SK-N-SH (cell line): ENCODE measurements at regions of chr19 and their contacts with region 1.

Region 1: GRCh38 chr19:38142176-38143035 is 81.6 kb downstream of the DPF1 start:
- DNase-seq: peak; percentile 87
- H3K4me3 ChIP-seq: no peak overlapping the region
- H3K27ac ChIP-seq: no peak overlapping the region
- H3K4me1 ChIP-seq: no peaks in the 10 kb centered on the region
- H3K27me3 ChIP-seq: no peaks in the 10 kb centered on the region
- CTCF ChIP-seq: peak; percentile 71
- EP300 ChIP-seq: no peak
- RAD21 ChIP-seq: peak; percentile 88

Region 2: DNA sequence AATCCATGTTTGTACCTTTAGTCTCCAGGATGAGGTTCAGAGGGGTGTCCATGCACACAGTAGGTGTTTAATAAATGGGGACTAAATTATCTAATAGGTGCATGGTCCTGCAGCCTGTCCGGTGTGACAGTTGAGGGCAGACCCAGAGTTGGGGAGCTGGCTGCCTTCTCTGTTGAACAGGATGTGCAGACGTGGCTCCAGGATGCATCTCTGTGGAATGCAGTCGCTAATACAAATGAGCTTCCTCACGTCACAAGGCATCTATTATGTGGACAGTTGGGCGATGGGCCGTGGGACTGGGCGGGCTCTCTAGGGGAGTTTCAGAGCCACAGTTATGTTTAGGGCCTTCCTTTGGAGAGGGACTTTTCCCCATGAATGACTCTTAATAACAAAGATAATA is 164.4 kb before region 1 on chr19:
- CTCF ChIA-PET with region 1: no interaction called
- POLR2A ChIA-PET with region 1: no interaction called
- DNase-seq: no peak
- H3K4me3 ChIP-seq: no peak overlapping the region
- H3K27ac ChIP-seq: peak overlapping the region in 1 of 2 experiments; percentile 62; a peak in 2 of 4 replicates
- H3K4me1 ChIP-seq: peaks cover 4 to 6% of the 10 kb centered on the region in 2 experiments; a peak in 1 of 4 replicates
- H3K27me3 ChIP-seq: no peaks in the 10 kb centered on the region
- CTCF ChIP-seq: no peak
- EP300 ChIP-seq: no peak
- RAD21 ChIP-seq: no peak

Region 3: GRCh38 chr19:38049105-38049649 is 93.2 kb before region 1 on chr19:
- CTCF ChIA-PET with region 1: no interaction called
- POLR2A ChIA-PET with region 1: no interaction called
- DNase-seq: no peak
- H3K4me3 ChIP-seq: no peak overlapping the region
- H3K27ac ChIP-seq: no peak overlapping the region
- H3K4me1 ChIP-seq: no peaks in the 10 kb centered on the region
- H3K27me3 ChIP-seq: no peaks in the 10 kb centered on the region
- CTCF ChIP-seq: no peak
- EP300 ChIP-seq: no peak
- RAD21 ChIP-seq: no peak

Region 4: GRCh38 chr19:38095411-38096308 is 46.7 kb before region 1 on chr19:
- CTCF ChIA-PET with region 1: interaction called, 11 read pairs
- POLR2A ChIA-PET with region 1: no interaction called
- DNase-seq: peak; percentile 74
- H3K4me3 ChIP-seq: no peak overlapping the region; a peak in 1 of 4 replicates
- H3K27ac ChIP-seq: no peak overlapping the region
- H3K4me1 ChIP-seq: peaks cover 0 to 20% of the 10 kb centered on the region in 2 experiments; a peak in 1 of 4 replicates
- H3K27me3 ChIP-seq: no peaks in the 10 kb centered on the region
- CTCF ChIP-seq: peak; percentile 75
- EP300 ChIP-seq: no peak
- RAD21 ChIP-seq: peak; percentile 65

Region 5: GRCh38 chr19:38122402-38123093 is 19.9 kb before region 1 on chr19:
- CTCF ChIA-PET with region 1: interaction called, 14 read pairs
- POLR2A ChIA-PET with region 1: no interaction called
- DNase-seq: no peak
- H3K4me3 ChIP-seq: no peak overlapping the region
- H3K27ac ChIP-seq: no peak overlapping the region
- H3K4me1 ChIP-seq: no peaks in the 10 kb centered on the region
- H3K27me3 ChIP-seq: no peaks in the 10 kb centered on the region
- CTCF ChIP-seq: no peak
- EP300 ChIP-seq: no peak
- RAD21 ChIP-seq: no peak

Region 6: DNA sequence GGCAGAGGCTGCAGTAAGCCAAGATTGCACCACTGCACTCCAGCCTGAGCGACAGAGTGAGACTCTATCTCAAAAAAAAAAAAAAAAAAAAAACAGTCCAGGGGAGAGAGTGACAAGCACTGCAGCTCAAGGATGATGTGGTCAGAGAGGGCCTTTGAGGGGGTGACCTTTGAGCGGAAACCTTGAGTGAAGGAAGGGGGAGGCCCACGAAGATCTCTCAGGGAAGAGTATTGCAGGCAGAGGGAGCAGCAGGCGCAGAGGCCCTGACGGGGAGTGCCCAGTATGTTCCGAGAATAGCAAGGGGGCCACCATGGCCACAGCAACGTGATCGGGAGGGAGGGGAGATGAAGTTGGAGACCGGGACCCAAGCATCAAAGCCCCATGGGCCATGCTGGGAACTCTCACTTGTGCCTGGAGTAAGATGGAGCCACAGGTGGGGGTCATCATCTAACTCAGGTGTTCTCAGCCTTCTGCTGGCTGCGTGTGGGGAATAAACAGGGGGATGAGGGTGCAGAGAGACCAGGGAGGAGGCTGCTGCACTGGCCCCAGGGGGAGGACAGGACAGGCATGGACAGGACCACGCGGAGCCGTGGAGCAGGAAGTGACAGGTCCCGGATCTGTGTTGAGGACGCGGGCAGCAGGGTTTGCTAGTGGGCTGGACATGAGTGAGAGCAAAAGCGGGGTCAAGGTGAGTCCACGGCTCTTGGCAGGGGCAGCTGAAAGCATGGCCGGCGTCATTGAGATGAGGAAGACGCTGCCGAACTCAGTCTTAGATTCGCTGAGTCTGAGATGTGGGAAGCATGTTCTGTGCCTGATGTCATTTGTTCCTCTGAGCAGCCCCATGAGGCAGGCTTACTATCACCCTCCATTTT is 21.2 kb after region 1 on chr19:
- CTCF ChIA-PET with region 1: interaction called, 14 read pairs
- POLR2A ChIA-PET with region 1: no interaction called
- DNase-seq: no peak
- H3K4me3 ChIP-seq: no peak overlapping the region
- H3K27ac ChIP-seq: no peak overlapping the region
- H3K4me1 ChIP-seq: no peaks in the 10 kb centered on the region
- H3K27me3 ChIP-seq: no peaks in the 10 kb centered on the region
- CTCF ChIP-seq: no peak
- EP300 ChIP-seq: no peak
- RAD21 ChIP-seq: no peak

Region 7: GRCh38 chr19:38224014-38224862 is 81.8 kb after region 1 on chr19 and contains the start of gene DPF1:
- CTCF ChIA-PET with region 1: interaction called, 23 read pairs
- POLR2A ChIA-PET with region 1: no interaction called
- DNase-seq: peak; percentile 99
- H3K4me3 ChIP-seq: peak within 1 kb of the TSS; percentile 53 to 65
- H3K27ac ChIP-seq: peak within 1 kb of the TSS in 1 of 2 experiments; percentile 31; a peak in 1 of 4 replicates
- H3K4me1 ChIP-seq: peaks cover 0 to 9% of the 10 kb centered on the region in 2 experiments; a peak in 1 of 4 replicates
- H3K27me3 ChIP-seq: no peaks in the 10 kb centered on the region
- CTCF ChIP-seq: peak; percentile 28
- EP300 ChIP-seq: no peak
- RAD21 ChIP-seq: 0 out of 2 replicates have a peak, but pooled peaks have one; percentile 11
- polyA plus RNA-seq, gene DPF1: 4.3 and 4.8 TPM in 2 replicates

Region 8: GRCh38 chr19:38245826-38246498 is 103.6 kb after region 1 on chr19:
- CTCF ChIA-PET with region 1: interaction called, 11 read pairs
- POLR2A ChIA-PET with region 1: no interaction called
- DNase-seq: no peak
- H3K4me3 ChIP-seq: no peak overlapping the region
- H3K27ac ChIP-seq: no peak overlapping the region
- H3K4me1 ChIP-seq: peaks cover 0 to 1% of the 10 kb centered on the region in 2 experiments; a peak in 1 of 4 replicates
- H3K27me3 ChIP-seq: no peaks in the 10 kb centered on the region
- CTCF ChIP-seq: no peak
- EP300 ChIP-seq: no peak
- RAD21 ChIP-seq: no peak